ENCODE measurements at regions of chr11 and their contacts with region 1.

Region 1: GRCh38 chr11:59802639-59803176 is 7.9 kb downstream of the MRPL16 start:
- DNase-seq: no peak
- H3K4me3 ChIP-seq: no peak overlapping the region
- H3K27me3 ChIP-seq: no peaks in the 10 kb centered on the region
- CTCF ChIP-seq: peak; percentile 58

Region 2: GRCh38 chr11:59791639-59792038 is 11.1 kb before region 1 on chr11:
- CTCF ChIA-PET with region 1: interaction called, 27 read pairs
- POLR2A ChIA-PET with region 1: no interaction called
- DNase-seq: no peak
- H3K4me3 ChIP-seq: no peak overlapping the region
- H3K27me3 ChIP-seq: no peaks in the 10 kb centered on the region
- CTCF ChIP-seq: no peak

Measured in BJ (cell line).